Uterus (tissue), 4 donors: ENCODE measurements at regions of chr6 and their contacts with region 1.

Region 1: GRCh38 chr6:144482142-144482541 is 197.0 kb downstream of the UTRN start:
- DNase-seq: peak; percentile 74 to 84
- H3K4me3 ChIP-seq: no peak overlapping the region
- H3K27ac ChIP-seq: no peak overlapping the region
- H3K4me1 ChIP-seq: no peaks in the 10 kb centered on the region
- H3K27me3 ChIP-seq: no peaks in the 10 kb centered on the region
- CTCF ChIP-seq: peak; percentile 58 to 76 (median 72)
- POLR2A ChIP-seq: no peak

Region 2: GRCh38 chr6:144104898-144105487 is 377.1 kb before region 1 on chr6:
- intact Hi-C with region 1: loop called (anchors 10 kb)
- DNase-seq: no peak
- H3K4me3 ChIP-seq: no peak overlapping the region
- H3K27ac ChIP-seq: no peak overlapping the region
- H3K4me1 ChIP-seq: no peaks in the 10 kb centered on the region
- H3K27me3 ChIP-seq: no peaks in the 10 kb centered on the region
- CTCF ChIP-seq: peak; percentile 59 to 80 (median 68)
- POLR2A ChIP-seq: no peak

Region 3: GRCh38 chr6:144305985-144306384 is 176.2 kb before region 1 on chr6:
- intact Hi-C with region 1: no loop called
- DNase-seq: no peak
- H3K4me3 ChIP-seq: no peak overlapping the region
- H3K27ac ChIP-seq: no peak overlapping the region
- H3K4me1 ChIP-seq: no peaks in the 10 kb centered on the region
- H3K27me3 ChIP-seq: no peaks in the 10 kb centered on the region
- CTCF ChIP-seq: no peak
- POLR2A ChIP-seq: no peak